Posterior vena cava (tissue), 2 donors: ENCODE measurements at regions of chr6 and their contacts with region 1.

Region 1: GRCh38 chr6:155039618-155040017 is 44.5 kb downstream of the TIAM2 start:
- DNase-seq: no peak

Region 2: DNA sequence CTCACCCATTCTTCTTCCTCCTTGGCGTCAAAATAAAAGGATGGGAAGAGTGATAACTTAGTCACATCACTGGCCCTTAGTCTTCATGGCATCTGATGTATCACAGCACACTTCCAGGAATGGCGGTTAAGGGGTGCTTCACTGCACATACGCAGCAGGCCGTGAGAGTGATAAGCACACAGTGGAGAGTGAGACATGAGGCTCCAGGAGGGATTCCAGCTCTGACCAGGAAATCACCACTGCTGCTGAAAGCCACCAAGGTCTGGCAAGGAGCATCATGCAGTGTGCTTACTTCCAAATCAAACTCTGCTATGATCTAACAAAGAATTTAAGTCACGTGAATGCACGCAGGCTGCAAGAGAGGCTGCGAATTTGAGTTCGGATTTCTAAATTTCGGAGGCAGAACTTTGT is 1800.0 kb after region 1 on chr6:
- intact Hi-C with region 1: loop called in 1 of 2 experiments (anchors 5 kb)
- DNase-seq: no peak